ENCODE measurements at regions of chr15 and their contacts with region 1.

Region 1: GRCh38 chr15:71448688-71449114 is 333.4 kb downstream of the THSD4 start:
- DNase-seq: peak; percentile 66

Region 2: DNA sequence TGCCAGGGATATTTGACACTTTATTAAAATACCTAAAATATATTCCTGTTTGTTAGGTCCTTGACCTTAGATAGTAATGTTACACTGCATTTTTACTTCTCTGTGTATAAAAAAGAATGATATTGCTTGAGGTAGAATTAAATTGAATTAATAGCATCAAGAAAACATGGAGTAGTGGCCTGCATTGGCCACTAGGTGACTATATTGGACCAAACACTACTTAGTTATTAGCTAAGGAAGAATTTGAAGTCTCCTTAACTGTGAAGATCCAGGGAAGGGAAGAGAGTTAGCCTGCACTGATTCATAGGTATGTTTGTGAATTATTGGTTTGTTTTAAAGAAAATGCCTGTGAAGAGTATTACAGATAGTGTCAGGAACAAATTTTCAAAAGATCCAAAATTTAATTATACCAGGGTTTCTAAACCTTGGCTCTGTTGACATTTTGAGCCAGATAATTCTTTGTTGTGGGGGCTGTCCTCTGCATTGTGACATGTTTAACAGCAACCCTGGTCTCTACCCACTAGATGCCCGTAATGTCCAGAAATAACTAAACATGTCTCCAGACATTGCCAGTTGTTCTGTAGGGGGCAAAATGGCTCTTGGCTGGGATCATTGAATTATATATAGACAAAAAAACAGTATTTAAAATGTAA is 437.1 kb before region 1 on chr15:
- in situ Hi-C with region 1: loop called (anchors 25 kb)
- DNase-seq: peak; percentile 57

Measured in ACHN (cell line).